Activated naive CD4-positive, alpha-beta T cell treated with anti-CD3 and anti-CD28 coated beads for 36 hours (primary cell): ENCODE measurements at regions of chr17 and their contacts with region 1.

Region 1: DNA sequence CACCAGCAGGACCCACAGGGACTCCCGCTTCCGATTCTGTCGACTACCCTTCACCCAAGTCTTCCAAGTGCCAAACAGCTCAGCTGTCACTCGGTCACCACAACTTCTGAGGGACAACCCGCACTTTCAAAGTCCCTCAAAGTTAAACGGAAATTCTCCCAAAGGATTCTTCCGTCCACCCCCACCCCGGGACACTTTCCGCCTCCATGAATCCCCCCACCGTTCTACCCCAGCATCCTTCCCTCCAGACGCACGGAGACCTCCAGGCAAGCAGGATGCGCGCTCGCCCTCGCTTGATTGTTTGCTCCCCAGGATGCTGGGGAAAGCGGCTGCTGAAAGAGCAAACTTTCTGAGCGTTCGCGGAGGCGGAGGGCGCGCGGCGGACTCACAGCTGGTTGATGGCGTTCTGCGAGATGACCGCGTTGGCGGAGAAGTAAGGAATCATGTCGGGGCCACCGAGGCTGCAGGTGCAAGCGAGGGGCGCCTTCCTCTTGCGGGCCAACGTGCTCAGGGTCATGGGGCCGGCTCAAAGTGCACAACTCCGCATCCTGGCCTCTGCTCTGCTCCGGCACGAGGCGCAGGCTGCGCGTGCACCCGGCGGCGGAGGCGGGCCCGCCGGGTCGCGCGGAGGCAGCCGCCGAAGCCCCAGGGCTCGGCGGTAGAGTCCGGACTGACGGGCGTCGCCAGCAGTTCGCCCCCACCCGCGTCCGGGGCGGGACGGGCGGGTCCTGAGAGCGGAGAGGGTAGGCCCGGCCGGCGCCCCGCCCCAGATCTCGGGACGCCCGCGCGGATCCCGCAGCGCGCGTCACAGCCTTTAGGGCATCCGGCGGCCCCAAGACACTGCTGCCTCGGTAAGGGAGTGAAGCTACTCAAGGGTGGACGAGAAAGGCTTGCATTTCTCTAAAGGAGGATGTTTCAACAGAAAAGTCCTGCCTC is 138.3 kb upstream of the CORO6 start:
- DNase-seq: peak; percentile 95
- H3K4me3 Mint-ChIP-seq: peak overlapping the region; percentile 90
- H3K27ac Mint-ChIP-seq: peak overlapping the region; percentile 94
- H3K4me1 Mint-ChIP-seq: peaks cover 32% of the 10 kb centered on the region
- H3K27me3 Mint-ChIP-seq: no peaks in the 10 kb centered on the region

Region 2: GRCh38 chr17:29568331-29569244 is 192.4 kb before region 1 on chr17 and contains the start of gene TP53I13:
- CTCF ChIA-PET with region 1: no interaction called
- intact Hi-C with region 1: loop called (anchors 5 kb)
- DNase-seq: peak; percentile 91
- H3K4me3 Mint-ChIP-seq: peak within 1 kb of the TSS; percentile 94
- H3K27ac Mint-ChIP-seq: peak within 1 kb of the TSS; percentile 88
- H3K4me1 Mint-ChIP-seq: peaks cover 12% of the 10 kb centered on the region
- H3K27me3 Mint-ChIP-seq: no peaks in the 10 kb centered on the region
- total RNA-seq, gene TP53I13: 30.9 to 37.2 TPM

Region 3: DNA sequence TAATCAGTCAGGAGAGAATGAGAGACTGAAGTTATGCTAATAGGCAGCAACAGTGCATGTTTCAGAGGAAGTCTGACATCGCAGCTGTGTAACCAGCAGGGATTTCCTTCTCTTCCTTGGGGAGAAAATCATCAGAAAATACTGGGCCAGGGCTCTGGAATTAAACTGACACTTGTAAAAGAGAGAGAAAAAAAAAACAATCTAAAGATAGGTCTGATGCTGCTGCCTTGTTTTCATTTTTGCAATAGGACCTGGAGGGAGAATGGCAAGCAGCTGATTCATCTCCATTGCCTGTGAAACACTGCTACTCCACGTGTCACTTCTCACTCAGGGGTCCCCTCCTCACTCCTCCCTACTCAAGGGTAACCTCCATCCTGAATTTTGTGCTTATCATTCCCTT is 120.6 kb before region 1 on chr17:
- CTCF ChIA-PET with region 1: interaction called, 6 read pairs
- intact Hi-C with region 1: loop called (anchors 1 kb)
- DNase-seq: no peak
- H3K4me3 Mint-ChIP-seq: no peak overlapping the region
- H3K27ac Mint-ChIP-seq: peak overlapping the region; percentile 82
- H3K4me1 Mint-ChIP-seq: peaks cover 38% of the 10 kb centered on the region
- H3K27me3 Mint-ChIP-seq: no peaks in the 10 kb centered on the region

Region 4: GRCh38 chr17:29687596-29687995 is 73.4 kb before region 1 on chr17:
- CTCF ChIA-PET with region 1: interaction called, 3 read pairs
- intact Hi-C with region 1: loop called (anchors 1 kb)
- DNase-seq: no peak
- H3K4me3 Mint-ChIP-seq: no peak overlapping the region
- H3K27ac Mint-ChIP-seq: no peak overlapping the region
- H3K4me1 Mint-ChIP-seq: peaks cover 34% of the 10 kb centered on the region
- H3K27me3 Mint-ChIP-seq: no peaks in the 10 kb centered on the region

Region 5: DNA sequence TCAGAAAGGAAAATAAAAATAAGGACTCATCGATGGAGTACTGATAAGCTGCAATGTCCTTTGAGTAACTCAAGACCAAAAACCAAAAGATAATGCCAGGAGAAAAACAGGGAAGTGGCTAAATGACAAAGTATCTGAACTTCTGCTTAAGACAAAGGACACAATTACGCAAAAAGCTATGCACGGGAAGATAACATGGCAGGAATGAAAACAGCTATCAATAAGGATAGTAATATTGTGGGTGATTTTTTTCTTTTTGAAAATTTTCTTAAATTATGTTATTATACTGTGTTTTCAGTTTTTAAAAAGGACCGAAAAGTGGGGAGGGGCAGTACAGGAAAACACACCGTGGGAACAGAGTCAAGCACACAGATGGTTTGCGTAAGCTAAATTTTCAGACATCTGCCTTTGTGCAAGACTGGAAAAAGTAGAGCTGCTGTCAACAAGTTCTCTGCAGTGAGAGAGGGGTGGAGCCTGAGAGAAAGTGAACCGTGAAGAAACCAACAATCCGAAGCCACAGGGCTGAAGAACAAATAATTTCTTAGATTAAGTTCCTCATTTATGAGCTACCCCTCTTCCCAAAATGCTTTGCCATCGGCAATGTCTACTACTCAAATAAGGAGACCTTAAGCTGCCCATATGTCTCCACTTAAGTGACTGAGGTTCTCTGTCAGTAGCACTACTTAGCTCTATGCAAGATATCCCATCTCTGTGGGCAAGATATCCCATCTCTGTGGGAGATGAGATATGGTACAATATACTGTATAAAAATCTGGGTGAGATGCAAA is 38.4 kb before region 1 on chr17:
- CTCF ChIA-PET with region 1: interaction called, 7 read pairs
- intact Hi-C with region 1: loop called (anchors 1 kb)
- DNase-seq: peak; percentile 58
- H3K4me3 Mint-ChIP-seq: peak overlapping the region; percentile 55
- H3K27ac Mint-ChIP-seq: peak overlapping the region; percentile 80
- H3K4me1 Mint-ChIP-seq: peaks cover 83% of the 10 kb centered on the region
- H3K27me3 Mint-ChIP-seq: no peaks in the 10 kb centered on the region

Region 6: GRCh38 chr17:29777663-29778062 is 16.6 kb after region 1 on chr17:
- CTCF ChIA-PET with region 1: interaction called, 8 read pairs
- intact Hi-C with region 1: loop called (anchors 1 kb)
- DNase-seq: no peak
- H3K4me3 Mint-ChIP-seq: no peak overlapping the region
- H3K27ac Mint-ChIP-seq: no peak overlapping the region
- H3K4me1 Mint-ChIP-seq: peaks cover 5% of the 10 kb centered on the region
- H3K27me3 Mint-ChIP-seq: no peaks in the 10 kb centered on the region

Region 7: GRCh38 chr17:29789196-29790170 is 28.5 kb after region 1 on chr17:
- CTCF ChIA-PET with region 1: no interaction called
- intact Hi-C with region 1: no loop called
- DNase-seq: no peak
- H3K4me3 Mint-ChIP-seq: no peak overlapping the region
- H3K27ac Mint-ChIP-seq: no peak overlapping the region
- H3K4me1 Mint-ChIP-seq: peaks cover 4% of the 10 kb centered on the region
- H3K27me3 Mint-ChIP-seq: no peaks in the 10 kb centered on the region